ENCODE measurements at regions of chr1 and their contacts with region 1.

Region 1: DNA sequence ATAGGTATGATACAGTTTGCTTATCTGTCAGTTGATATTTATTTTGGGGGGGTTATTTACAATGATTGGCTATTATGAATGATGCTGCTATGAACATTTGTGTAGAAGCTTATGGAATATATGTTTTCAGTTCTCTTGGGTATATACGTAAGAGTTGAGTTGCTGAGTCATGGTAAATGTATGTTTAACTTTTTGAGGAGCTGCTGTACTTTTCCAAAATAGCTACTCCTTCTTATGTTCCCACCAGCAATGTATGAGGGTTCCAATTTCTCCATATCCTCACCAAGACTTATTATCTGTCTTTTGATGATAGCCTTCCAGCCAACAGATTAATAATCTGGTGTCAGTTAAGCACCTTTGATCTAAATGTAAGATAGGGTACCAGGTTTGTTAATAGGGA is 11.9 kb downstream of the SOAT1 start:
- DNase-seq: no peak
- ATAC-seq: no peak
- H3K4me3 ChIP-seq: no peak overlapping the region
- H3K4me3 Mint-ChIP-seq: no peak overlapping the region
- H3K27ac ChIP-seq: no peak overlapping the region
- H3K27ac Mint-ChIP-seq: no peak overlapping the region
- H3K4me1 ChIP-seq: peaks cover 14% of the 10 kb centered on the region
- H3K4me1 Mint-ChIP-seq: peaks cover 49% of the 10 kb centered on the region
- H3K27me3 ChIP-seq: no peaks in the 10 kb centered on the region
- H3K27me3 Mint-ChIP-seq: no peaks in the 10 kb centered on the region
- CTCF ChIP-seq: no peak

Region 2: DNA sequence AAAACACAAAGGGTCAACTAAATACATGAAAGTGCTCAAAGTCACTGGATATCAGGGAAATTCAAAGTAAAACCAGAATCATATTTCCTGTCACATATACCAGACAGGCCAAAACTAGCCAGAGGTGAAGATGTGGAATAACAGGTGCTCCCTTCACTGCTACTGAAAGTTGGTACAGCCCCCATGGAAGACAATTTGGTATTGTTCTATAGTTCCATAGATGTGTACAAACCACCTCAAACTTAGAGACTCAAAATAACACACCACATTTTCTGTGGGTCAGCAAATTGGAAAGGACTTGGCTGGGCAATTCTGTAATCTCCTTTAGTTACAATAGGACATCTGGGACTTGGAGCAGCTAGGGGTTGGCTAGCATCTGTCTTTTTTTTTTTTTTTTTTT is 36.4 kb before region 1 on chr1:
- CTCF ChIA-PET with region 1: no interaction called
- POLR2A ChIA-PET with region 1: no interaction called
- intact Hi-C with region 1: no loop called
- DNase-seq: no peak
- ATAC-seq: no peak
- H3K4me3 ChIP-seq: no peak overlapping the region
- H3K4me3 Mint-ChIP-seq: no peak overlapping the region
- H3K27ac ChIP-seq: no peak overlapping the region
- H3K27ac Mint-ChIP-seq: no peak overlapping the region
- H3K4me1 ChIP-seq: no peaks in the 10 kb centered on the region
- H3K4me1 Mint-ChIP-seq: no peaks in the 10 kb centered on the region
- H3K27me3 ChIP-seq: no peaks in the 10 kb centered on the region
- H3K27me3 Mint-ChIP-seq: no peaks in the 10 kb centered on the region
- CTCF ChIP-seq: no peak

Region 3: DNA sequence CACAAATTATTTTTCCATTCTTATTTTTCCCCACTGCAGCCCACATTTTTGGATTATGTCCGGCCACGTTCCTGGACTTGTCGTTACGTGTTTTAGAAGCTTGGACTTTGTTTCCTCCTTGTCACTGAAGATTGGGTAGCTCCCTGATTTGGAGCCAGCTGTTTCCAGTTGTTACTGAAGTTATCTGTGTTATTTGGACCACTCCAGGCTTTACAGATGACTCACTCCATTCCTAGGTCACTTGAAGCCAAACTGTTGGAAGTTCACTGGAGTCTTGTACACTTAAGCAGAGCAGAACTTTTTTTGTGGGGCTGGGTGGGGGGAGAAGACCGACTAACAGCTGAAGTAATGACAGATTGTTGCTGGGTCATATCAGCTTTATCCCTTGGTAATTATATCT is 48.1 kb after region 1 on chr1:
- CTCF ChIA-PET with region 1: no interaction called
- POLR2A ChIA-PET with region 1: no interaction called
- intact Hi-C with region 1: loop called in 1 of 2 experiments (anchors 5 kb)
- DNase-seq: no peak
- ATAC-seq: no peak
- H3K4me3 ChIP-seq: no peak overlapping the region
- H3K4me3 Mint-ChIP-seq: no peak overlapping the region
- H3K27ac ChIP-seq: no peak overlapping the region
- H3K27ac Mint-ChIP-seq: peak overlapping the region; percentile 4
- H3K4me1 ChIP-seq: no peaks in the 10 kb centered on the region
- H3K4me1 Mint-ChIP-seq: peaks cover 3% of the 10 kb centered on the region
- H3K27me3 ChIP-seq: no peaks in the 10 kb centered on the region
- H3K27me3 Mint-ChIP-seq: no peaks in the 10 kb centered on the region
- CTCF ChIP-seq: no peak